ENCODE measurements at regions of chr15 and their contacts with region 1.

Region 1: GRCh38 chr15:90750186-90750585 is 33.0 kb downstream of the BLM start:
- DNase-seq: peak in 3 of 14 experiments; percentile 24 to 54 (median 49)
- ATAC-seq: peak; percentile 14
- H3K4me3 ChIP-seq: peak overlapping the region; percentile 19
- H3K4me3 Mint-ChIP-seq: peak overlapping the region; percentile 1
- H3K27ac ChIP-seq: no peak overlapping the region
- H3K27ac Mint-ChIP-seq: no peak overlapping the region
- H3K4me1 ChIP-seq: no peaks in the 10 kb centered on the region
- H3K4me1 Mint-ChIP-seq: peaks cover 15% of the 10 kb centered on the region
- H3K27me3 ChIP-seq: no peaks in the 10 kb centered on the region
- H3K27me3 Mint-ChIP-seq: no peaks in the 10 kb centered on the region
- CTCF ChIP-seq: no peak

Region 2: DNA sequence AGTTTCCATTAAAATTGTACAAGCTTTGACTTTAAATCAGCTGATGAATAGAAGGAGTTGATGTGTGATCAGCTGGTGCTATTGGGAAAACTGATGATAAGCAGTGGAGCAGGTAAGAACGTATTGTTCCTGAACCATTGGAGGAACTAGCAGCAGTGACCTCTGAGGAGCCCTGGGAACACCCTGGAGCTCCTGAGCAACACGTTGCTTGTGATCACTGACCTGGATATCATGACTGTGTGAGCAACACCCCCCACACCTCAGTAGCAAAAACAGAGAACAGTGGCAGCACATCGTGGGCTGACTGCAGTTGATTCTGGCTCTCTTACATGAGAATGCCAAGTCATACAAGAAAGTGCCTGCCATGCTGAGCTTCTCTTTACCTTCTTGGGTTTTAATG is 39.9 kb after region 1 on chr15:
- CTCF ChIA-PET with region 1: no interaction called
- POLR2A ChIA-PET with region 1: no interaction called
- intact Hi-C with region 1: loop called in 1 of 2 experiments (anchors 5 kb)
- DNase-seq: no peak
- ATAC-seq: no peak
- H3K4me3 ChIP-seq: no peak overlapping the region
- H3K4me3 Mint-ChIP-seq: no peak overlapping the region
- H3K27ac ChIP-seq: no peak overlapping the region
- H3K27ac Mint-ChIP-seq: no peak overlapping the region
- H3K4me1 ChIP-seq: no peaks in the 10 kb centered on the region
- H3K4me1 Mint-ChIP-seq: no peaks in the 10 kb centered on the region
- H3K27me3 ChIP-seq: no peaks in the 10 kb centered on the region
- H3K27me3 Mint-ChIP-seq: no peaks in the 10 kb centered on the region
- CTCF ChIP-seq: no peak

Measured in CD4-positive, alpha-beta T cell (primary cell).